Body of pancreas (tissue), 4 donors: ENCODE measurements at regions of chr13 and their contacts with region 1.

Region 1: DNA sequence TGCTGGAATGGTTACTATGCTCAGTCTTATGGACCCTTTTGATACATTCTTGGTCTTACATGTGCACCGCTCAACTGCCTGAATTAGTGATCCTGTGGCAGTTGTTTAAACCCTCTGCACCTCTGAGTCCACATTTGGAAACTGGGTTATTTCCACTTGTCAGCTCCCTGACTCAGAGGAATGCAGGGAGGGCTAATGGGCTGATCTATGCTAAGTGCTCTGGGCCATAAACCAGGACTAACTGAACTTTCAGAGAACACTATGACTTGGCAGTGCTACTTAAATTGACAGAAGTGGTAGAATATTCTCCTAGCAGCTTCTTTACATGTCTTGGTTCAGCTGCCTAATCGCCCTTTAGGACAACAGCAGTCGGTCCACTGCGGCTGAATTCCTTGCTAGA is 26.8 kb upstream of the MED4 start:
- DNase-seq: peak in 1 of 4 donors; percentile 3
- ATAC-seq: no peak
- H3K4me3 ChIP-seq: no peak overlapping the region
- H3K27ac ChIP-seq: no peak overlapping the region
- H3K4me1 ChIP-seq: no peaks in the 10 kb centered on the region
- H3K27me3 ChIP-seq: no peaks in the 10 kb centered on the region
- CTCF ChIP-seq: no peak
- POLR2A ChIP-seq: no peak

Region 2: GRCh38 chr13:47277774-47278173 is 844.0 kb before region 1 on chr13:
- intact Hi-C with region 1: no loop called
- DNase-seq: no peak
- ATAC-seq: no peak
- H3K4me3 ChIP-seq: no peak overlapping the region
- H3K27ac ChIP-seq: no peak overlapping the region
- H3K4me1 ChIP-seq: no peaks in the 10 kb centered on the region
- H3K27me3 ChIP-seq: no peaks in the 10 kb centered on the region
- CTCF ChIP-seq: no peak
- POLR2A ChIP-seq: no peak

Region 3: DNA sequence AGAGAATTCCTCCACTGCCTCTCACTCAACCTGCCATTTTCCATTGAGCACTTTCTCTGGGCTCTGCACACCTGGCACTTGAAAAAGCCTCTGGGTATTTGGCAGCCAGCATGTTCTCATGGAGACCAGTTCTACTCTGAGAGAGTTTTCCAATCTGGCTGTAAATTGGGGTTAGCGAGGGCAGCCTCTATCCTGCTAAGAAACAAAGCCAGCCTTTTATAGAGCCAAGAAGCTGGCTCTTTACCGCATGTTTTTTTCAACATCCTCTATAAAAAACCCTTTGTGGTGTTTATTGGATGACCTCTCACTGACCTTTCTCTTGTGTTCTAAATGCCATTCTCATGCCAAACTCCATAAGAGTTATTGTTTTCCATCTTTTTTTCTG is 463.7 kb after region 1 on chr13:
- intact Hi-C with region 1: loop called (anchors 5 kb)
- DNase-seq: peak in 3 of 4 donors; percentile 24 to 44 (median 41)
- ATAC-seq: peak; percentile 86
- H3K4me3 ChIP-seq: no peak overlapping the region
- H3K27ac ChIP-seq: peak overlapping the region in 2 of 4 donors; percentile 43 to 59
- H3K4me1 ChIP-seq: peaks cover 41% of the 10 kb centered on the region
- H3K27me3 ChIP-seq: no peaks in the 10 kb centered on the region
- CTCF ChIP-seq: no peak
- POLR2A ChIP-seq: no peak